Mammary epithelial cell (primary cell): ENCODE measurements at regions of chr1 and their contacts with region 1.

Region 1: DNA sequence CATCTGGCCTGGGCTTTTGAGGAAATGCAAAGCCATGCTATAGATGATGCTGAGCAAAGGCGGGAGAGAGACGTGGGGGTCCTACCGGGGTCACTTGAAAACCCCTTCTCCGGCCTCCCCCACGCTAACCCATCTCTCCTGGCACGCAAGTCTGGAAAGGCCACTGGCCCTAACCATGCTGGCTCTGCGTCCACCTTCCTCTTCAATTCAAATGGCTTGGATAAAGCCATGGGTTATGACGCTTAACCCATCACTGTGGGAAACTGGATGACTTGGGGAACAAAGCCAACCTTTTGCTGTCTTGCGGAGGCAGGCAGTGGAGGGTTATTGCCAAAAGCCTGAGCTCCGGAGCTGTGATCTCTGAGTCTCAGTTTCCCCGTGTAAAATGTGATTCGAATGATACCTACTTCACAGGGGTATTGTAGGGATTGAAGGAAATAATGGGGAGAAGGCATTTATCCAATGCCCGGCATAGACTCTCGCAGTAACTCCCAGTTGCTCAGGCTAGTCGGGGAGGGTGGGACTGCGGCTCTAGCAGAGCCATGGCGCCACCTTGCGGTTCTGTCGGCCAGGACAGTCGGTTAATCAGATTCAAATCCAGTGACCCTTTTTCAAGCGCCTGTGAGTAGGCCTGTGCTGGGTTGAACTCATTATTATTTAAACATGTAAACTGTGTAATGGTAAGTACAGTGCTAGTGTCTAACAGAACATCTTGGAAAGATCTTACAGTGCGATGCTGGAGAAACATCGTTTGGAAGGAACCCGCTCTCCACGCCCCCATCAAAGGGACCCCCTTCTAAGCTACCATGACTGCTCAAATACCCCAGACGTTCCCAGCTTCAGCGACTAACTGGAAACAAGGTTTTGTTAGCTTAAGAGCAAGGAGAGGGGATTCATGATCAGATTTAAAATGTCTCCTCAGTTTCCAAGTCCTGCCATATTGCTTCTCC is 20.3 kb downstream of the NEK2 start:
- DNase-seq: peak; percentile 68
- H3K4me3 ChIP-seq: no peak overlapping the region
- H3K27ac ChIP-seq: no peak overlapping the region
- H3K4me1 ChIP-seq: peaks cover 13% of the 10 kb centered on the region
- H3K27me3 ChIP-seq: no peaks in the 10 kb centered on the region
- CTCF ChIP-seq: peak; percentile 86 to 97

Region 2: GRCh38 chr1:210438928-210439809 is 1215.9 kb before region 1 on chr1:
- CTCF ChIA-PET with region 1: no interaction called
- dilution Hi-C with region 1: no loop called
- in situ Hi-C with region 1: no loop called
- intact Hi-C with region 1: loop called (anchors 10 kb)
- DNase-seq: peak; percentile 72
- H3K4me3 ChIP-seq: no peak overlapping the region
- H3K27ac ChIP-seq: peak overlapping the region; percentile 19
- H3K4me1 ChIP-seq: peaks cover 23% of the 10 kb centered on the region
- H3K27me3 ChIP-seq: no peaks in the 10 kb centered on the region
- CTCF ChIP-seq: no peak

Region 3: GRCh38 chr1:210915890-210916507 is 739.1 kb before region 1 on chr1:
- CTCF ChIA-PET with region 1: no interaction called
- dilution Hi-C with region 1: no loop called
- in situ Hi-C with region 1: no loop called
- intact Hi-C with region 1: no loop called
- DNase-seq: no peak
- H3K4me3 ChIP-seq: no peak overlapping the region
- H3K27ac ChIP-seq: no peak overlapping the region
- H3K4me1 ChIP-seq: no peaks in the 10 kb centered on the region
- H3K27me3 ChIP-seq: peaks cover 4% of the 10 kb centered on the region
- CTCF ChIP-seq: no peak

Region 4: GRCh38 chr1:211566431-211567025 is 88.6 kb before region 1 on chr1:
- CTCF ChIA-PET with region 1: no interaction called
- dilution Hi-C with region 1: no loop called
- in situ Hi-C with region 1: loop called (anchors 5 kb)
- intact Hi-C with region 1: no loop called
- DNase-seq: no peak
- H3K4me3 ChIP-seq: no peak overlapping the region
- H3K27ac ChIP-seq: no peak overlapping the region
- H3K4me1 ChIP-seq: no peaks in the 10 kb centered on the region
- H3K27me3 ChIP-seq: no peaks in the 10 kb centered on the region
- CTCF ChIP-seq: no peak